ENCODE measurements at regions of chr2 and their contacts with region 1.

Region 1: DNA sequence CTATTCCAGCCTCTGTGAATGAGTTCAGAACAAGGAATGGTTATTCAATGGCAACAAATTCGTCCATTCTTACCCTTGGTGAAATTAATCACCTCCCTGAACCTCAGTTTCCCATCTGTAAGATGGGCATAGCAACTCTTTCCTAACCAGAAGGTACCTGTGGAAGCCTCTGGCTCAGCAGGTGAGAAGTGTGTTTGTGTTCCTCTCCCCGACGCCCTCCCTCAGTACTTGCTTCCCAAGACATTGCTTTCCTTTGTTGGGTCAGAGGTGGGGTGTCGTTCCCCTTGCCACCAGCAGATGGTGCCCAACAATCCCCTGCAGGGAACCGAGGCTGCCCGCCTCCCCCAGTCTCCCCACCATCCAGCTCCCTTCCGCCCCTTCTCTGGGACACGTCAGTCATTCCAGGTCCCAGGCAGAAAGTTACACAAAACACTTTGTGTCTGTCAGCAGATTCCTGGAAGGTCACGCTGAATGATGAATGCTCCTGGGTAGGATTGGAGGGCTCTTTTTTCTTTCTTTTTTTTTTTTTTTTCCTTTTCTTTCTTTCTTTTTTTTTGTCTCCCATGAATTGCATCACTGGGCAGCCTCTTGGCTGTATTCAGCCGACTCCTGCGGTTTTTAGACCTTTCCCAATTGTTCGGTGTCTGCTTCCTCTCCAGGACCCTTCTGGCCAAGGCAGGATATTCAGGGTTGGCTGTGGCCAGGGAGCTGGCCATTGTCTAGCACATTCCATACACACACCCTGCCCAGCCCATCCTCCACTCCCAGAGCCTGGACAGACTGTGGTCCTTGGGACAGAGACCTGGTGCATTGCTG is 117.3 kb downstream of the LPIN1 start:
- DNase-seq: peak; percentile 68
- H3K4me3 ChIP-seq: no peak overlapping the region
- H3K27ac ChIP-seq: no peak overlapping the region
- H3K4me1 ChIP-seq: no peaks in the 10 kb centered on the region
- H3K27me3 ChIP-seq: no peaks in the 10 kb centered on the region
- CTCF ChIP-seq: peak; percentile 94

Region 2: GRCh38 chr2:11583840-11584524 is 279.7 kb before region 1 on chr2:
- intact Hi-C with region 1: no loop called
- DNase-seq: peak; percentile 55
- H3K4me3 ChIP-seq: no peak overlapping the region
- H3K27ac ChIP-seq: peak overlapping the region; percentile 22
- H3K4me1 ChIP-seq: no peaks in the 10 kb centered on the region
- H3K27me3 ChIP-seq: no peaks in the 10 kb centered on the region
- CTCF ChIP-seq: peak; percentile 84

Region 3: GRCh38 chr2:11698009-11698922 is 165.5 kb before region 1 on chr2:
- intact Hi-C with region 1: no loop called
- DNase-seq: peak; percentile 33
- H3K4me3 ChIP-seq: no peak overlapping the region
- H3K27ac ChIP-seq: no peak overlapping the region
- H3K4me1 ChIP-seq: no peaks in the 10 kb centered on the region
- H3K27me3 ChIP-seq: no peaks in the 10 kb centered on the region
- CTCF ChIP-seq: no peak

Region 4: DNA sequence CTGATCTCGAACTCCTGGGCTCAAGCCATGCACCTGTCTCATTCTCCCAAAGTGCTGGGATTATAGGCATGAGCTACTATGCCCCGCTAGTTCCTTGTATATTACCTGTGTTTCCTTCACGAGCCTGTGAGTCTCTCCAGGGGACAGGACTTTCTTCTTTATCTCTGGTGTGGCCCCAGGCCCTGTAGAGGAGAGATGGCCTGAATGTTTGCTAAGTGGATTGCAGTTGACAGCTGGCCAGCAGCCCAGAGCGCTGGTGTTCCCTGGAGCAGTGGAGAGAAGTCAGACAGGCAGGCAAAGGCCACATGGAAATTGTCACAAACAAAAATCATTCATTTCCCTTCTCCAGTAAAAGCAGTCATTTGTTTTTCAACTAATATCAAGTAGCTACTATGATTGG is 99.4 kb before region 1 on chr2:
- intact Hi-C with region 1: no loop called
- DNase-seq: peak; percentile 73
- H3K4me3 ChIP-seq: no peak overlapping the region
- H3K27ac ChIP-seq: no peak overlapping the region
- H3K4me1 ChIP-seq: peaks cover 4% of the 10 kb centered on the region
- H3K27me3 ChIP-seq: no peaks in the 10 kb centered on the region
- CTCF ChIP-seq: no peak

Region 5: GRCh38 chr2:11904029-11904428 is 40.3 kb after region 1 on chr2:
- intact Hi-C with region 1: no loop called
- DNase-seq: no peak
- H3K4me3 ChIP-seq: no peak overlapping the region
- H3K27ac ChIP-seq: no peak overlapping the region
- H3K4me1 ChIP-seq: no peaks in the 10 kb centered on the region
- H3K27me3 ChIP-seq: no peaks in the 10 kb centered on the region
- CTCF ChIP-seq: no peak

Region 6: GRCh38 chr2:12931186-12931844 is 1067.6 kb after region 1 on chr2:
- intact Hi-C with region 1: loop called (anchors 2 kb)
- DNase-seq: no peak
- H3K4me3 ChIP-seq: no peak overlapping the region
- H3K27ac ChIP-seq: no peak overlapping the region
- H3K4me1 ChIP-seq: no peaks in the 10 kb centered on the region
- H3K27me3 ChIP-seq: no peaks in the 10 kb centered on the region
- CTCF ChIP-seq: peak; percentile 73

Measured in colonic mucosa (tissue), 4 donors.